CD4-positive, alpha-beta T cell (primary cell): ENCODE measurements at regions of chr10 and their contacts with region 1.

Region 1: GRCh38 chr10:123154092-123154921 is at the start of gene BUB3:
- DNase-seq: peak; percentile 80 to 99 (median 91)
- ATAC-seq: peak; percentile 89
- H3K4me3 ChIP-seq: peak within 1 kb of the TSS; percentile 95
- H3K4me3 Mint-ChIP-seq: peak within 1 kb of the TSS; percentile 100
- H3K27ac ChIP-seq: peak within 1 kb of the TSS; percentile 71 to 85
- H3K27ac Mint-ChIP-seq: peak within 1 kb of the TSS; percentile 97
- H3K4me1 ChIP-seq: peaks cover 52% of the 10 kb centered on the region
- H3K4me1 Mint-ChIP-seq: peaks cover 79% of the 10 kb centered on the region
- H3K27me3 ChIP-seq: peaks cover 21 to 22% of the 10 kb centered on the region in 2 experiments
- H3K27me3 Mint-ChIP-seq: peaks cover 23% of the 10 kb centered on the region
- CTCF ChIP-seq: no peak
- total RNA-seq, gene BUB3: 167 to 178 TPM

Region 2: GRCh38 chr10:122374237-122374869 is 780.0 kb before region 1 on chr10 and contains the start of gene PLEKHA1:
- CTCF ChIA-PET with region 1: no interaction called
- POLR2A ChIA-PET with region 1: interaction called, 16 read pairs
- intact Hi-C with region 1: loop called (anchors 1 to 5 kb)
- DNase-seq: peak; percentile 85 to 96 (median 92)
- ATAC-seq: peak; percentile 91
- H3K4me3 ChIP-seq: peak within 1 kb of the TSS; percentile 91
- H3K4me3 Mint-ChIP-seq: peak within 1 kb of the TSS; percentile 93
- H3K27ac ChIP-seq: peak within 1 kb of the TSS; percentile 83 to 87
- H3K27ac Mint-ChIP-seq: peak within 1 kb of the TSS; percentile 94
- H3K4me1 ChIP-seq: peaks cover 26% of the 10 kb centered on the region
- H3K4me1 Mint-ChIP-seq: peaks cover 49% of the 10 kb centered on the region
- H3K27me3 ChIP-seq: peaks cover 0 to 8% of the 10 kb centered on the region in 2 experiments
- H3K27me3 Mint-ChIP-seq: peaks cover 10% of the 10 kb centered on the region
- CTCF ChIP-seq: no peak
- total RNA-seq, gene PLEKHA1: 24.9 to 26.8 TPM

Region 3: DNA sequence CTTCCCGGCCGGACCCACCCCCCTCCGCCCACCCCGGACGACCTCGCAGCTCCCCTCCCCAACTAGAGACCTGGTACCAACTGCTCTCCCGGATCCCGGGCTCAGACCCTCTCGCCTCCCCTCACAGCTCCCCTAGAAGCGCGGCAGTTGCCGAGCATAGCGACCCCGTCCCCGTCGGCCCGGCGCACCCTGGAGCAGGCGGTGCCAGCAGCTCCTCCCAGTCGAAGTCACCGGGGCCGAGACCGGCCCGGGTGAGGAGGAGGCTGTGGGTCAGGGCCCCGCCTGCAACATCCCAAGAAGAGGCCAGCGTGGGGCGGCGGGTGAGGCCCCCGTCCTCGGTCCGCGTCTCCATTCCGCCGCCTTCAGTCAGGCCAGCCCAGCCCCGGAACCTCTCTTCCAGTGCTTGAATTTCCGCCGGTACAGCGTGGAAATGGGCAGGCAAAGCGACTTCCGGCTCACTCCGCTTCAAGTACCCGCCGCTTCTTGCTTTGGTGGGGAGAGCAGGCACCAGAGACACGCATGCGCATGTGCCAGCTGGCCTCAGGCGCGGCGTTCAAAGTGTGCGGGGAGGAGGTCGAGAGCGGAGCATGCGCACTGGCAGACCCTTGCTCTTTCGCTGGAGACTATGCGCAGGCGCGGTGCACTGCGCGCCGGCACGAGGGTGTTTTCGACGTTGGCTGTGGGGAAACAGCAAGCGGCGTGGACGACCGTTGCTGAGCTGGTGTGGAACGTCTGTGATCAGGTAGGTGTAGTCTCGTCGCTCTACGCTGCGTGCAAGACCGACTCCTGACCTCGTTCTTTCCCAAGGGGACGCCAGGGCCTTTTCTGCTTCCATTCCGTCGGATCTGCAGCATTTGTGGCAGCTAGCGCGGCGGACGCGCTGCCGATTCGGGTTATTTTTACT is 200.2 kb before region 1 on chr10 and contains the start of gene C10orf88:
- CTCF ChIA-PET with region 1: no interaction called
- POLR2A ChIA-PET with region 1: interaction called, 8 read pairs
- intact Hi-C with region 1: loop called in 1 of 2 experiments (anchors 5 kb)
- DNase-seq: peak; percentile 94 to 100 (median 97)
- ATAC-seq: peak; percentile 93
- H3K4me3 ChIP-seq: peak within 1 kb of the TSS; percentile 84
- H3K4me3 Mint-ChIP-seq: peak within 1 kb of the TSS; percentile 94
- H3K27ac ChIP-seq: no peak within 1 kb of the TSS
- H3K27ac Mint-ChIP-seq: peak within 1 kb of the TSS; percentile 82
- H3K4me1 ChIP-seq: peaks cover 23% of the 10 kb centered on the region
- H3K4me1 Mint-ChIP-seq: peaks cover 40% of the 10 kb centered on the region
- H3K27me3 ChIP-seq: no peaks in the 10 kb centered on the region
- H3K27me3 Mint-ChIP-seq: no peaks in the 10 kb centered on the region
- CTCF ChIP-seq: no peak
- total RNA-seq, gene C10orf88: 2.3 to 2.5 TPM

Region 4: GRCh38 chr10:123132576-123133477 is 21.5 kb before region 1 on chr10:
- CTCF ChIA-PET with region 1: interaction called, 11 read pairs
- POLR2A ChIA-PET with region 1: interaction called, 23 read pairs
- intact Hi-C with region 1: no loop called
- DNase-seq: peak; percentile 77 to 91 (median 82)
- ATAC-seq: peak; percentile 67
- H3K4me3 ChIP-seq: peak overlapping the region; percentile 10
- H3K4me3 Mint-ChIP-seq: peak overlapping the region; percentile 83
- H3K27ac ChIP-seq: no peak overlapping the region
- H3K27ac Mint-ChIP-seq: no peak overlapping the region
- H3K4me1 ChIP-seq: peaks cover 49% of the 10 kb centered on the region
- H3K4me1 Mint-ChIP-seq: peaks cover 29% of the 10 kb centered on the region
- H3K27me3 ChIP-seq: peaks cover 59 to 74% of the 10 kb centered on the region in 2 experiments
- H3K27me3 Mint-ChIP-seq: peaks cover 90% of the 10 kb centered on the region
- CTCF ChIP-seq: peak; percentile 87

Region 5: GRCh38 chr10:124418726-124419501 is 1264.6 kb after region 1 on chr10 and contains the start of gene OAT:
- CTCF ChIA-PET with region 1: no interaction called
- POLR2A ChIA-PET with region 1: no interaction called
- intact Hi-C with region 1: loop called in 1 of 2 experiments (anchors 5 kb)
- DNase-seq: peak; percentile 91 to 98 (median 96)
- ATAC-seq: peak; percentile 97
- H3K4me3 ChIP-seq: peak within 1 kb of the TSS; percentile 75
- H3K4me3 Mint-ChIP-seq: peak within 1 kb of the TSS; percentile 92
- H3K27ac ChIP-seq: peak within 1 kb of the TSS; percentile 23 to 44
- H3K27ac Mint-ChIP-seq: peak within 1 kb of the TSS; percentile 82
- H3K4me1 ChIP-seq: peaks cover 14% of the 10 kb centered on the region
- H3K4me1 Mint-ChIP-seq: peaks cover 41% of the 10 kb centered on the region
- H3K27me3 ChIP-seq: peaks cover 0 to 3% of the 10 kb centered on the region in 2 experiments
- H3K27me3 Mint-ChIP-seq: peaks cover 9% of the 10 kb centered on the region
- CTCF ChIP-seq: no peak
- total RNA-seq, gene OAT: 48.5 to 54.9 TPM

Region 6: DNA sequence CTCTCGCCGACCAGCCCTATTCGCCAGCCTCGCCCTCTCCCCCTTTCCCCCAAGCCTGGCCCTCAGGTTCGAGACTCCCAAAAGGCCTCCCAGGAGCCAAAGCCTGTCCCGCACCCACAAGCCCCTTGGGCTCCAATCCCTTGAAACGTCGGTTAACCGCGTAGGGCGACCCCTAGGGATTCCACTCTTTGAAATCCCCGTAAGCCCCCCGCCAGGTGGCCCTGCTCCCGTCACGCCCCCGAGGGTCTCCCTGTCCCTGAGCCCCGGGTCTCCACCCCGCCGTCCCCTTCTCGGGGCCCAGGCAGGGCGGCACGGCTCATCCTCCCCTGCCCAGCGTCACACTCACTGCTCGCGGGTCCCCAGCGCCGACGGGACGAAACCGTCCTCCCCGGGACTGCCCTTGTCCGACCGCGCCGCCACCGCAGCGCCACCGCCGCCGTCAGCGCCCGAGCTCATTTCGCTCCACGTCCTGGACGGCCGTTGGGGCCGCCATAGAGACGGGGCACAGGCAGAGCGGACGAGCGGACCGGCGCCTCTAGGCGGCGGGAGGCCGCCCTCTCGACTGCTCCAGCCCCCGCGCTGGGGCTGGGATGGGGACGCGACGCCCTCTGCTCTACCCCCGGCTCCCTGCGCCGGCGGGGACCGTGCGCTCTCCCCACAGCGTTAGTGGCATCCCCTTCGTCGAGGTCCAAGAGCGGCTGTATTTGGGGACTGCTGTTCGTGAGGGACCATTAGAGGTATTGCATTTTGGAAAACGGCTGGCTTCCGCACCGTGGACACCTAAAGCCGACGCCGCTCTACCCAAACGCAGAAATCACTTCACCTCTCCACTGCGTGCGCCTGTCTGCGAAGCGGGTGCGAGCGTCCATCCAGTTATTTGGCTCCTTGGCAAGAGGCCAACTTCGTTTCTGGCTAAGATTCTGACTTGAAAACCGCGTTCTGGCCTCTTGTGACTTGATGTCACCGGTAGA is 1637.4 kb after region 1 on chr10 and contains the start of gene EEF1AKMT2:
- CTCF ChIA-PET with region 1: no interaction called
- POLR2A ChIA-PET with region 1: no interaction called
- intact Hi-C with region 1: loop called in 1 of 2 experiments (anchors 10 kb)
- DNase-seq: peak; percentile 61 to 92 (median 78)
- ATAC-seq: peak; percentile 92
- H3K4me3 ChIP-seq: peak within 1 kb of the TSS; percentile 80
- H3K4me3 Mint-ChIP-seq: peak within 1 kb of the TSS; percentile 99
- H3K27ac ChIP-seq: peak within 1 kb of the TSS; percentile 65 to 74
- H3K27ac Mint-ChIP-seq: peak within 1 kb of the TSS; percentile 92
- H3K4me1 ChIP-seq: peaks cover 15% of the 10 kb centered on the region
- H3K4me1 Mint-ChIP-seq: peaks cover 22% of the 10 kb centered on the region
- H3K27me3 ChIP-seq: no peaks in the 10 kb centered on the region
- H3K27me3 Mint-ChIP-seq: no peaks in the 10 kb centered on the region
- CTCF ChIP-seq: no peak
- total RNA-seq, gene EEF1AKMT2: 14.4 to 16.7 TPM